ENCODE measurements at regions of chr4 and their contacts with region 1.

Region 1: DNA sequence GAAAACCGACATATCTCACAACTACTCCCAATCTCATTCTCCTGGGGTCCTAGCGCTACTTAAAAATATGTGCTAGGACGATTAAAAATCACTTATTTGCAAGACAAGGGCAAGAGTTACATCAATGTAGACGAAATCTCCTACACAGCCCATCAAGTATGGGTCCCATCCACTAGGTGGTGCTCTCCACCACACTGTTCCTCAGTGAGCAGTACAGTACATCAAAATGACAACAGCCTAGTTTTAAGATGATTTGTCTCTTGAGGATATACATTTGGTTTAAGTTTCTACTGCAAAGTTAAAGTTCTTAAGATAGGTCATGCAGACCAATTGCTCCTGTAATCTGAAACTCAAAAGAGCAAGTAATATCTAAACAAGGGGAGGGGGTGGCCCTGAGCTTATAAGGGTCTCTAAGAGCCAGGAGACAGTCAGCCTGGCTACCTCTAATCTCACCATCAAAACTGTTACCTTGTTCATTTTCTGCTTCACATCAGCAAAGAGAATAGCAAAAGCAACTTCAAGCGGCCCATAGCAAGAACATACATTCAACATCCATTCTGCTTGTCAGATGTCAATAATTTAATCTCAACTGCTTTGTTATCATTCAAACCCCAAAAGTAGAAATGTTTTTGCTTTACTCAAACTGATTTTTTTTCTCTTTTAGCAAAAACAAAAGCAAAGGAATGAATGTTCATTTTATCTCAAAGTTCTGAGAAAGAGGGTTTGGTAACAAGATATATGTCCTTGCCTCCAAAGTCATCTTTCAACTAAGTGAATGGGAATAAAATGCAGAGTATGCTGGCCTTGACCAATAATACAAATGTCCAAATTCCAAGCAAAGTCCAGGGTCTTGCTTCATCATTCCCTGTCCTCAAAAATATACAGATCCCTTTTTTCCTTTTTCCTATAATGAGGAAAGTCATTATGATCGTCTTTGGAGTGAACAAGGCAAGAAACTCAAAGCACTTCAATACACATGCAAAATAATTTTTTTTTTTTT is 53.1 kb downstream of the STX18 start:
- DNase-seq: peak; percentile 75
- H3K4me3 Mint-ChIP-seq: no peak overlapping the region
- H3K27ac Mint-ChIP-seq: no peak overlapping the region
- H3K4me1 Mint-ChIP-seq: peaks cover 6% of the 10 kb centered on the region
- H3K27me3 Mint-ChIP-seq: no peaks in the 10 kb centered on the region
- CTCF ChIP-seq: peak; percentile 74

Region 2: GRCh38 chr4:4524364-4524763 is 35.7 kb after region 1 on chr4:
- CTCF ChIA-PET with region 1: interaction called, 17 read pairs
- POLR2A ChIA-PET with region 1: no interaction called
- intact Hi-C with region 1: no loop called
- DNase-seq: no peak
- H3K4me3 Mint-ChIP-seq: no peak overlapping the region
- H3K27ac Mint-ChIP-seq: no peak overlapping the region
- H3K4me1 Mint-ChIP-seq: no peaks in the 10 kb centered on the region
- H3K27me3 Mint-ChIP-seq: no peaks in the 10 kb centered on the region
- CTCF ChIP-seq: no peak

Region 3: DNA sequence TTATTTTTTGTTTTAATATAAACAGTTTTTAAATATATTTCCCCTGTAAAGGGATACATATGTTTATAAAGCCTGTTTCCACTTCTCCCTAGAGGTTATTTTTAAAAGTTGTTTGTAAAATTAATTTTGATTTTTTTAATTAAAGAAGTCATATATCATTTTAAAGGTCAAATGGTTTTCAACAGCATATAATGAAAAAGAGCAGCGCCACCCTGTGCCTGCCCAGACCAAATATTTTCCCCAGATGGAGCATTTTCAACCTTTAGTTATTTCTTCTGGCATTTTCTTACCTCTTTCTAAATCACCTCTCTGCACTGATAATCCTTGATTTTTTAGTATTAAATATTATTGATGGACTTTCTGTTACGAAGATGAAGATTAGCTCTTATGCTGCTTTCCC is 391.8 kb after region 1 on chr4:
- CTCF ChIA-PET with region 1: interaction called, 11 read pairs
- POLR2A ChIA-PET with region 1: interaction called, 3 read pairs
- intact Hi-C with region 1: loop called (anchors 1 kb)
- DNase-seq: peak; percentile 14
- H3K4me3 Mint-ChIP-seq: no peak overlapping the region
- H3K27ac Mint-ChIP-seq: no peak overlapping the region
- H3K4me1 Mint-ChIP-seq: peaks cover 15% of the 10 kb centered on the region
- H3K27me3 Mint-ChIP-seq: no peaks in the 10 kb centered on the region
- CTCF ChIP-seq: peak; percentile 46

Region 4: DNA sequence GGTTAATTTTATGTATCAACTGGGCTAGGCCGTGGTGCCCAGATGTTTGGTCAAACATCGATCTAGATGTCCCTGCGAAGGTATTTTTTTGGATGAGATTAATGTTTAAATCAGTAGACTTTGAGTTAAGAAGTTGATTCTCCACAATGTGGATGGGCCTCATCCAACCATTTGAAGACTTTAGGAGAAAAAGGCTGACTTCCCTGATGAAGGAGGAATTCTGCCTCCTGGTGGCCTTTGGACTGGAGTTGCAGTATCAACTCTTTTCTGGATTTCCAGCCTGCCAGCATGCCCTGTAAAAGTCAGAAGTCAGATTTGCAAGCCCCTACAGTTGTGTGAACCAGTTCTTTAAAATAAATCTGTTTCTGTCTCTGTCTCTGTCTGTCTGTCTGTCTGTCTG is 654.0 kb after region 1 on chr4:
- CTCF ChIA-PET with region 1: no interaction called
- POLR2A ChIA-PET with region 1: no interaction called
- intact Hi-C with region 1: loop called (anchors 5 kb)
- DNase-seq: peak; percentile 54
- H3K4me3 Mint-ChIP-seq: no peak overlapping the region
- H3K27ac Mint-ChIP-seq: no peak overlapping the region
- H3K4me1 Mint-ChIP-seq: no peaks in the 10 kb centered on the region
- H3K27me3 Mint-ChIP-seq: peaks cover 61% of the 10 kb centered on the region
- CTCF ChIP-seq: peak; percentile 34